ENCODE measurements at regions of chr11 and their contacts with region 1.

Region 1: GRCh38 chr11:12235947-12236743 is 125.8 kb downstream of the MICAL2 start:
- DNase-seq: peak; percentile 78
- ATAC-seq: peak; percentile 86
- H3K4me3 Mint-ChIP-seq: peak overlapping the region; percentile 53
- H3K27ac Mint-ChIP-seq: peak overlapping the region; percentile 93
- H3K4me1 Mint-ChIP-seq: peaks cover 38% of the 10 kb centered on the region
- H3K27me3 Mint-ChIP-seq: no peaks in the 10 kb centered on the region

Region 2: GRCh38 chr11:12052676-12053605 is 183.2 kb before region 1 on chr11:
- CTCF ChIA-PET with region 1: interaction called, 17 read pairs
- POLR2A ChIA-PET with region 1: no interaction called
- intact Hi-C with region 1: no loop called
- DNase-seq: peak; percentile 54
- ATAC-seq: peak; percentile 60
- H3K4me3 Mint-ChIP-seq: no peak overlapping the region
- H3K27ac Mint-ChIP-seq: no peak overlapping the region
- H3K4me1 Mint-ChIP-seq: peaks cover 4% of the 10 kb centered on the region
- H3K27me3 Mint-ChIP-seq: no peaks in the 10 kb centered on the region

Region 3: DNA sequence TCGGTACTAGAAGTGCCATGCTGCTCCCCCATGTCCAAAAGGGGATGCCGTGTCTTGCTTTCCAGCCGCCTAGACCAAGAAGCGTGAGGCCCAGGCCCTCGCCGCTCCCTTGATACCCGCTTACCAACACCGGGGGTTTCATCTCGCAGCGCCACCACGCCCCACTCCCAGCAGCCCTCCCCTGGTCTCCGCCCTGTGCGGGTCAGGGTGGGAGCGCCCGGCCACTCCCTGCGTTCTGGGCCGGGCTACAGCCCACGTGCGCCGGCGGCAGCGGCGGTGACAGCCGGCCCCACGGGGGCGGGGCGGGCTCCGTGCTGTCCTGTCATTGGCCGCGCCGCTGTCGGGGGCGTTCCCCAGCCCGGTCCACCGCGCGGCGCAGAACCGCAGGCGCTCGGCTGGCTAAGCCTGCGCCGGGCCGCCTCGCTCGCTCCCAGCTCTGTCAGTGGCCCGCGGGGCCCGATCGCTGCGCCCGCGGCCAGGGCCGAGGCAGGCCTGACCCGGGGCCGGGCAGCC is 125.9 kb before region 1 on chr11 and contains the start of gene MICAL2:
- CTCF ChIA-PET with region 1: interaction called, 3 read pairs
- POLR2A ChIA-PET with region 1: interaction called, 3 read pairs
- intact Hi-C with region 1: loop called (anchors 1 to 2 kb)
- DNase-seq: peak; percentile 92
- ATAC-seq: peak; percentile 88
- H3K4me3 Mint-ChIP-seq: peak within 1 kb of the TSS; percentile 75
- H3K27ac Mint-ChIP-seq: peak within 1 kb of the TSS; percentile 90
- H3K4me1 Mint-ChIP-seq: peaks cover 41% of the 10 kb centered on the region
- H3K27me3 Mint-ChIP-seq: no peaks in the 10 kb centered on the region
- total RNA-seq, gene MICAL2: 186 to 207 TPM

Region 4: DNA sequence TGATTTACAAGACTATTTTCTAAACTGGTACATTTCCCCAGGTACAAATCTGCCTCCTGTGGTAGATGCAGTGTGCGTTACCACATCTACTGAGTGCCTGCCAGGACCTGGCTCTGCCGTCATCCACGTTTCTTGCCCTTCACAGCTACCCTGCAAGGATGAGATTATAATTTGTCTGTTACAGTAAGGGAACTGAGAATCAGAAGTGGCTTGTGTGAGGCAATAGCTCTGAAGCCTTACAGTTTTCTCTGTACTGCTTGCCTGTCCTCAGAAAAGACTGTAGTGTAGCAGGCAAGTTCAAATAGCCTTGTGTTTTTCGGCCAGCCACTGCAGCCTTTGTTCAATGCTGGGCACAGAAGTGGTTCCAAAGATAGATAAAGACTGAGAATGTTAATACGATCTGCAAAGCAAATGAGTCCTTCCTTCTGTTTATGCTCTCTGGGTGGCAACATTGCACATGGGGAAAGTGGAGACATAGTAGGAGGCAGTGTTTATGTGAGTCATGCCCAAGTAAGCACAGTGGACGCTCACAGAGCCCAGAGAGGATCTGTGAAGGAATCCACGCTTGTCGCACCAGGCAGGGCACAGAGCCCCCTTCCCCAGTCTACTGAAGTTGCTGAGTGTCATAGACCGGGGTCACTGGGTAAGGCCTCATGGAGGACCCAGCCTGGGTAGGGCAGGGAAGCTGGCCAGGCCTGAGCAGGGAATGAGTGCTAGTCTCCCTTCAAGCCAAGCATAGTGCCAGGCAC is 76.6 kb before region 1 on chr11:
- CTCF ChIA-PET with region 1: interaction called, 7 read pairs
- POLR2A ChIA-PET with region 1: no interaction called
- intact Hi-C with region 1: loop called in 1 of 2 experiments (anchors 5 kb)
- DNase-seq: no peak
- ATAC-seq: peak; percentile 39
- H3K4me3 Mint-ChIP-seq: no peak overlapping the region
- H3K27ac Mint-ChIP-seq: peak overlapping the region; percentile 89
- H3K4me1 Mint-ChIP-seq: peaks cover 71% of the 10 kb centered on the region
- H3K27me3 Mint-ChIP-seq: no peaks in the 10 kb centered on the region

Region 5: GRCh38 chr11:12185914-12186313 is 50.2 kb before region 1 on chr11:
- CTCF ChIA-PET with region 1: interaction called, 13 read pairs
- POLR2A ChIA-PET with region 1: interaction called, 4 read pairs
- intact Hi-C with region 1: loop called in 1 of 2 experiments (anchors 1 kb)
- DNase-seq: no peak
- ATAC-seq: no peak
- H3K4me3 Mint-ChIP-seq: no peak overlapping the region
- H3K27ac Mint-ChIP-seq: peak overlapping the region; percentile 43
- H3K4me1 Mint-ChIP-seq: peaks cover 47% of the 10 kb centered on the region
- H3K27me3 Mint-ChIP-seq: no peaks in the 10 kb centered on the region

Region 6: DNA sequence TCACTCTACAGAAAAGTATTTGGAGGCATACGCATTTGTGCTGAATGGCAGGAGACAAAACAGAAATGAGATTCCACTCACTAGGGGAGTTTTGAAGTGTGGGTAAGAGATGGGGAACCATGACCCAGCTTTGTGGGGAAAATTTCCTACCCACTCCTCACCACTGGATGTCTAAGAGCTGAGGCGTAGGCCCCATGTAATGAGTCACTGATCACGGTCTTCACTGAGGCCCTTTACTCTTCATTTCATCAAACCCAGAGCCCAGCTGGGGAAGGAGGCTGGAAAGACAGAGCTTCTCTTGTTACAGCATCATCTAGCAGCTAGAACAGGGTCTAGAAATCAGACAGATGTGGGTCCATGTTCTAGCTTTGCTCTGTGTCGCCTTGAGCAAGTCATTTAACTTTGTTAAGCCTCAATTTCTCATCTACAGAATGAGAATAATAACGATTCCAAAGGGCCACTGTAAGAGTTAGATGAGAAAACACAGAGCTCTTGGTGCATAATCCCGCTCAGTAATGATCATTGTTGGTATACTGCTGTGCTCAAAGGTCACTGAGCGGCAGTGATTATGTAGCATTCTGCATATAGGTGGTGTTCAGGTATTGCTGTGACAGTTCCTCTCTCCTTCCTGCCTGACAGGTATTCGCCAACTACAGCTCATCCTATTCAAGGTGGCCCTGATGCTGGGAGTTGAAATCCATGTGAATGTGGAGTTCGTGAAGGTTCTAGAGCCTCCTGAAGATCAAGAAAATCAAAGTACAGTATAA is 28.6 kb before region 1 on chr11:
- CTCF ChIA-PET with region 1: interaction called, 16 read pairs
- POLR2A ChIA-PET with region 1: interaction called, 4 read pairs
- intact Hi-C with region 1: loop called in 1 of 2 experiments (anchors 1 kb)
- DNase-seq: peak; percentile 80
- ATAC-seq: peak; percentile 85
- H3K4me3 Mint-ChIP-seq: peak overlapping the region; percentile 50
- H3K27ac Mint-ChIP-seq: peak overlapping the region; percentile 92
- H3K4me1 Mint-ChIP-seq: peaks cover 69% of the 10 kb centered on the region
- H3K27me3 Mint-ChIP-seq: no peaks in the 10 kb centered on the region

Region 7: GRCh38 chr11:12281571-12282478 is 45.7 kb after region 1 on chr11:
- CTCF ChIA-PET with region 1: interaction called, 23 read pairs
- POLR2A ChIA-PET with region 1: interaction called, 3 read pairs
- intact Hi-C with region 1: loop called (anchors 2 to 5 kb)
- DNase-seq: peak; percentile 89
- ATAC-seq: peak; percentile 76
- H3K4me3 Mint-ChIP-seq: no peak overlapping the region
- H3K27ac Mint-ChIP-seq: peak overlapping the region; percentile 14
- H3K4me1 Mint-ChIP-seq: peaks cover 18% of the 10 kb centered on the region
- H3K27me3 Mint-ChIP-seq: no peaks in the 10 kb centered on the region

Region 8: DNA sequence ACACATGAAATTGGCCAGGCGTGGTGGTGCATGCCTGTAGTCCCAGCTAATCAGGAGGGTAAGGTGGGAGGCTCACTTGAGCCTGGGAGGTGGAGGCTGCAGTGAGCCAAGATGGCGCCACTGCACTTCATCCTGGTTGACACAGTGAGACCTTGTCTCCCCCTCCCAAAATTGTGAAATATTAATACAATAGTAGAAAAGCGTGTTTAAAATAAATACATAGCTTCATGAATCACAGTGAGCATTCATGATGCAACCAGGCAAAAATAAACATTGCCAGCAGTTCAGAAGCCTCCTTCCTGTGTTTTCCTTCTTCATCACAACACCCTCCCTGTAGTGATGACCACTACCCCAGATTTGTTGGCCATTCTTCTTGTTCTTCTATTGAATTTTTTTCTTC is 433.8 kb after region 1 on chr11:
- CTCF ChIA-PET with region 1: no interaction called
- POLR2A ChIA-PET with region 1: no interaction called
- intact Hi-C with region 1: no loop called
- DNase-seq: no peak
- ATAC-seq: no peak
- H3K4me3 Mint-ChIP-seq: no peak overlapping the region
- H3K27ac Mint-ChIP-seq: no peak overlapping the region
- H3K4me1 Mint-ChIP-seq: peaks cover 5% of the 10 kb centered on the region
- H3K27me3 Mint-ChIP-seq: peaks cover 57% of the 10 kb centered on the region

Measured in activated CD4-positive, alpha-beta T cell treated with anti-CD3 and anti-CD28 coated beads for 36 hours (primary cell).